CD8-positive, alpha-beta T cell (primary cell): ENCODE measurements at regions of chr12 and their contacts with region 1.

Region 1: DNA sequence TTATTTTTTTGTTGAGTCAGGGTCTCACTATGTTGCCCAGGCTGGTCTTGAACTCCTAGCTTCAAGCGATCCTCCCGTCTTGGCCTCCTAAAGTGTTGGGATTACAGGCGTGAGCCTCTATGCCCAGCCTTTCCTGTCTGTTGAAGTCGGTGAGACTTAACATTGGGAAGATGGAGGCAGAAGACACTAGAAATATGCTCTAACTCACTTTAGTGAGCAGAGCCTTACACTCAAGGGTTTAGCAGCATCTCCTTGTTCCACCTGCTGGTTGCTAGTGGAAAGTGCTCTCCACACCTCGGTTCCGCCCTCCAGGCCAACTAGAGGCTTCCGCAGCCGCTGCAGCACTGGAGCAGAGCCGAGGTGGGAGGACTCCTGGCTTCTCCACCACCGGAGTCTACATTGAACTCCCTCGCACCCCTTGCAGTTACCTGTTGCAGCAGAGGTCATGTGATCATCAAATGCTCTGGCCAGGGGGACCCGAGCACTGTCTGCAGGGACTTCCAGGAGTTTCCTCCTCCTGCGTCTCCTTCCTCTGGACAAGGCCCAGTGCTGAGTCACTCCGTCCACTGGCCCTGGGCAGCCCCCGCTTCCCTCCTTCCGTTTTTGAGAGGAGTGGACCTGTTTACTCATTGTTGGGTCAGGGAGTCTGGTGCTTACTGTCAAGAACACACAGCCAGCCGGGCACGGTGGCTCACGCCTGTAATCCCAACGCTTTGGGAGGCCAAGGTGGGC is 9.4 kb upstream of the HVCN1 start:
- DNase-seq: peak; percentile 57 to 90 (median 76)
- ATAC-seq: peak; percentile 100
- H3K4me3 ChIP-seq: no peak overlapping the region
- H3K4me3 Mint-ChIP-seq: peak overlapping the region; percentile 16
- H3K27ac ChIP-seq: no peak overlapping the region
- H3K27ac Mint-ChIP-seq: peak overlapping the region; percentile 34
- H3K4me1 ChIP-seq: peaks cover 7% of the 10 kb centered on the region
- H3K4me1 Mint-ChIP-seq: peaks cover 9% of the 10 kb centered on the region
- H3K27me3 ChIP-seq: no peaks in the 10 kb centered on the region
- H3K27me3 Mint-ChIP-seq: no peaks in the 10 kb centered on the region
- CTCF ChIP-seq: peak; percentile 83

Region 2: DNA sequence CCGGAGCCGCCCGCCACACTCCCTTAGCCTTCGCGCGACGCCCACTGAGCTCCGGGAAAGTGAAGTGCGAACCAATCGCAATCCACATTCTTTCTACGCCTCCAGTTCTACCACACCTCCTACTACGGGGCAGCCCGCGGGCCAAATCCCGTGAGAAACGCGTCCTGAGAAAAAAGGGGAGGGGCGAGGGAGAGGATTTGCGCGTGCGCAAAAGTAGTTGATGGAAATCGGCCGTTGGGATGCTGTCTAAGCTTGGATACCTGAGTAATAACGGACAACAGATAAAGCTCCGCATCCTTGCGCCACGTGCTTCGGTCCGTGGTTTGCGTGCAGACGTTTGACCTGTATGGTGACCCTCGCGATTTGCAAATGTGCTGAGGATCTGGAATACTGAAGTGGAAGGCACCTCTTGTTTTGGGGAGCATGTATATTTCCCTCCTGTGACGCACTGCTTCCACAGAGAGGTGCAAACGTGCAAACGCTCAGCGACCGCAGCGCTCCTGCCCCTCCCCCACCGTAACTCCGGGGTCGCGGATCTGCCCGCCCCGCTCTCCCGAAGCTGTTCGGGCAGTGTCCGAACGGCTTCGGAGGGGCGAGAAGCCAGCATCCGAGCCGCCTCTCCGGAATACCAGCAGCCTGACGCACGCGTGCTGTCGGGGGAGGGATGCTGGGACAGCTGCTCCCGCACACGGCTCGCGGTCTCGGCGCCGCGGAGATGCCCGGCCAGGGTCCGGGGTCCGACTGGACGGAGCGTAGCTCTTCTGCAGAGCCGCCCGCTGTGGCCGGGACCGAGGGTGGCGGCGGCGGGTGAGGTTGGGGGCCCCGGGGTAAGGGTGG is 229.9 kb before region 1 on chr12 and contains the starts of genes FAM216A and GPN3:
- CTCF ChIA-PET with region 1: interaction called, 4 read pairs
- POLR2A ChIA-PET with region 1: no interaction called
- intact Hi-C with region 1: loop called (anchors 2 to 5 kb)
- DNase-seq: peak; percentile 89 to 98 (median 95)
- ATAC-seq: peak; percentile 89
- H3K4me3 ChIP-seq: peak within 1 kb of the TSS; percentile 90 to 96
- H3K4me3 Mint-ChIP-seq: peak within 1 kb of the TSS; percentile 99
- H3K27ac ChIP-seq: peak within 1 kb of the TSS; percentile 74 to 87
- H3K27ac Mint-ChIP-seq: peak within 1 kb of the TSS; percentile 95
- H3K4me1 ChIP-seq: peaks cover 23% of the 10 kb centered on the region
- H3K4me1 Mint-ChIP-seq: peaks cover 43% of the 10 kb centered on the region
- H3K27me3 ChIP-seq: no peaks in the 10 kb centered on the region
- H3K27me3 Mint-ChIP-seq: no peaks in the 10 kb centered on the region
- CTCF ChIP-seq: no peak
- total RNA-seq, gene FAM216A: 3.5 to 4.5 TPM
- total RNA-seq, gene GPN3: 5.9 to 6.2 TPM

Region 3: GRCh38 chr12:110555577-110556406 is 142.5 kb before region 1 on chr12:
- CTCF ChIA-PET with region 1: interaction called, 4 read pairs
- POLR2A ChIA-PET with region 1: no interaction called
- intact Hi-C with region 1: loop called (anchors 1 kb)
- DNase-seq: no peak
- ATAC-seq: no peak
- H3K4me3 ChIP-seq: no peak overlapping the region
- H3K4me3 Mint-ChIP-seq: no peak overlapping the region
- H3K27ac ChIP-seq: no peak overlapping the region
- H3K27ac Mint-ChIP-seq: peak overlapping the region; percentile 24
- H3K4me1 ChIP-seq: peaks cover 24% of the 10 kb centered on the region
- H3K4me1 Mint-ChIP-seq: peaks cover 49% of the 10 kb centered on the region
- H3K27me3 ChIP-seq: no peaks in the 10 kb centered on the region
- H3K27me3 Mint-ChIP-seq: no peaks in the 10 kb centered on the region
- CTCF ChIP-seq: no peak

Region 4: DNA sequence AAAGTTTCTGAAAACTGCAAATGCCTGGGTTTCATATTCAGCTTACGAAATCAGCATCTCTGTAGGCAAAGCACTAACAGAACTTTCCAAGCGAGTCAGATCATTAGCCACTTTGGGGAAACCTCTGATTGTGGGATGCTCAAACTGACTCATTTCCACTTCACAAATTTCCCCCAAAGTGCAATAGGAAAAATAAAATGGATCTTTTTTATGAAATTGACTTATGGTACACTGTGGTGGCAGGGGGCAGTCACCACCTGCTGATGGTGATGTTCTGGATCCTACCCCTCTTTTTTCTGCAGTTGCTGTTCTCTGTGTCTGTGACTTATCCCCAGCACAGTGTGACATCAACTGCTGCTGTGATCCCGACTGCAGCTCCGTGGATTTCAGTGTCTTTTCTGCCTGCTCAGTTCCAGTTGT is 78.8 kb before region 1 on chr12:
- CTCF ChIA-PET with region 1: interaction called, 12 read pairs
- POLR2A ChIA-PET with region 1: interaction called, 3 read pairs
- intact Hi-C with region 1: loop called in 1 of 2 experiments (anchors 1 kb)
- DNase-seq: peak in 3 of 9 experiments; percentile 19 to 52 (median 34)
- ATAC-seq: peak; percentile 44
- H3K4me3 ChIP-seq: no peak overlapping the region
- H3K4me3 Mint-ChIP-seq: no peak overlapping the region
- H3K27ac ChIP-seq: no peak overlapping the region
- H3K27ac Mint-ChIP-seq: no peak overlapping the region
- H3K4me1 ChIP-seq: peaks cover 1% of the 10 kb centered on the region
- H3K4me1 Mint-ChIP-seq: peaks cover 2% of the 10 kb centered on the region
- H3K27me3 ChIP-seq: no peaks in the 10 kb centered on the region
- H3K27me3 Mint-ChIP-seq: no peaks in the 10 kb centered on the region
- CTCF ChIP-seq: no peak

Region 5: GRCh38 chr12:110826592-110827200 is 128.4 kb after region 1 on chr12:
- CTCF ChIA-PET with region 1: interaction called, 4 read pairs
- POLR2A ChIA-PET with region 1: no interaction called
- intact Hi-C with region 1: loop called in 1 of 2 experiments (anchors 1 kb)
- DNase-seq: peak; percentile 64 to 85 (median 78)
- ATAC-seq: peak; percentile 95
- H3K4me3 ChIP-seq: no peak overlapping the region
- H3K4me3 Mint-ChIP-seq: peak overlapping the region; percentile 65
- H3K27ac ChIP-seq: no peak overlapping the region
- H3K27ac Mint-ChIP-seq: no peak overlapping the region
- H3K4me1 ChIP-seq: no peaks in the 10 kb centered on the region
- H3K4me1 Mint-ChIP-seq: peaks cover 5% of the 10 kb centered on the region
- H3K27me3 ChIP-seq: no peaks in the 10 kb centered on the region
- H3K27me3 Mint-ChIP-seq: peaks cover 9% of the 10 kb centered on the region
- CTCF ChIP-seq: peak; percentile 80